ENCODE measurements at regions of chr4 and their contacts with region 1.

Region 1: DNA sequence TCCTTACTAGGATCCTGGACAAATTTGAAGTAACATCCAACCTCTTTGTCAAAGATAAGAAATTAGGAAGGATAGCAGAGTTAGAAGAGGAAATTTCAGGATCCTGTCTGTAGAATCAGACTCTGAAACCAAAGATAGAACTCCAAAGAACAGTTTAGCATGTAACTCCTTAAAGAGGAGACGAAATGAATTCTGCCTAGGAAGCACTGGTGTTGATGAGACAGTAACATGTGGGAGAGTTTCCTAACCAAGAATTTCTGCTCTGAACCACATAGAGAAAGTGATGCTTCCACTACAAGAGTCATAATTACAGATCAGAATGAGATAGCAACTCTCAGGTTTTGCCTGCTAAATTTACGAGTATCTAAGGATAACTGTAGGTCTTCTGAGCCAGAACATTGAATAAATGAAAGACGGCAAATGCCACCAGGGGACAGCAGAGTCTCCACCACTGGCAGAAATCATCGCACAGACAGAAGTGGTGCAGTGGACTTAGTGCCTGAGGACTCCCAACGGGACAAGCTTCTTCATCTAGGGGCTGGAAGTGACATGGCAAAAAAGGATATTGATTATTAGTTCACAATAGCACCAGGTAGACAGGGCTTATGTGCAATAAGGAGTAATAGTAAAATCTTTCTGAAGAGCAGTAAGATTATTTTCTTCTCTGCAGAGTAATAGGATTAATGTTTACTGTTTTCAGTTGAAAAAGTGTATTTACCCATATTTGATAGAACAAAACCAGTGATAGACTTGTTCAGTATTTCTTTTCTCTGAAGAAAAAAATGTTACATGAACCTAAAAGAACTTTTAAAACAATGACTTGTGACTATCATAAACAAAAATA is 6.7 kb upstream of the PPID start:
- DNase-seq: peak; percentile 70
- ATAC-seq: peak; percentile 91
- H3K4me3 Mint-ChIP-seq: no peak overlapping the region
- H3K27ac Mint-ChIP-seq: no peak overlapping the region
- H3K4me1 Mint-ChIP-seq: peaks cover 32% of the 10 kb centered on the region
- H3K27me3 Mint-ChIP-seq: peaks cover 32% of the 10 kb centered on the region
- CTCF ChIP-seq: peak; percentile 73

Region 2: DNA sequence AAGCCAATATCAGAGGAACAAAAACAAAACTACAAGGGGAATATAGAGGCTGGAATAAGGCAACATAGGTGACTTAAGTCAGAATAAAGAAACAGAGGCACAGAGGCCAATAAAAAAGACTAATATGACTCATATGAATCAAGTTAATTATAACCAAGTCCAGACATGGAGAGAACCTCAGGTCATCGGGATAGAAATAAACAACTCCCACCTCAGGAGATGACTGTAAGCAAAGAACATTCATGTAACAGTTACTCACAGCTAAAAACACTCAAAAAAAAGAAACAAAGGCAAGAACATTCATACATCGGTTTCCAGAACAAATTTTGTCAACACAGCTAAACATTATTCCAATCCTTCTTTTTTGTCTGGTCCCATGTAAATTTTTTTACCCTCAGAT is 268.6 kb before region 1 on chr4:
- CTCF ChIA-PET with region 1: no interaction called
- POLR2A ChIA-PET with region 1: no interaction called
- intact Hi-C with region 1: no loop called
- DNase-seq: no peak
- ATAC-seq: no peak
- H3K4me3 Mint-ChIP-seq: no peak overlapping the region
- H3K27ac Mint-ChIP-seq: no peak overlapping the region
- H3K4me1 Mint-ChIP-seq: no peaks in the 10 kb centered on the region
- H3K27me3 Mint-ChIP-seq: no peaks in the 10 kb centered on the region
- CTCF ChIP-seq: no peak

Region 3: GRCh38 chr4:158884280-158884679 is 154.3 kb after region 1 on chr4:
- CTCF ChIA-PET with region 1: no interaction called
- POLR2A ChIA-PET with region 1: no interaction called
- intact Hi-C with region 1: no loop called
- DNase-seq: no peak
- ATAC-seq: no peak
- H3K4me3 Mint-ChIP-seq: no peak overlapping the region
- H3K27ac Mint-ChIP-seq: no peak overlapping the region
- H3K4me1 Mint-ChIP-seq: no peaks in the 10 kb centered on the region
- H3K27me3 Mint-ChIP-seq: no peaks in the 10 kb centered on the region
- CTCF ChIP-seq: no peak

Region 4: GRCh38 chr4:159446266-159446976 is 716.5 kb after region 1 on chr4:
- CTCF ChIA-PET with region 1: no interaction called
- POLR2A ChIA-PET with region 1: no interaction called
- intact Hi-C with region 1: loop called (anchors 10 kb)
- DNase-seq: peak; percentile 31
- ATAC-seq: peak; percentile 94
- H3K4me3 Mint-ChIP-seq: no peak overlapping the region
- H3K27ac Mint-ChIP-seq: no peak overlapping the region
- H3K4me1 Mint-ChIP-seq: no peaks in the 10 kb centered on the region
- H3K27me3 Mint-ChIP-seq: peaks cover 11% of the 10 kb centered on the region
- CTCF ChIP-seq: peak; percentile 73

Region 5: GRCh38 chr4:160082432-160083207 is 1352.7 kb after region 1 on chr4:
- CTCF ChIA-PET with region 1: no interaction called
- POLR2A ChIA-PET with region 1: no interaction called
- intact Hi-C with region 1: no loop called
- DNase-seq: no peak
- ATAC-seq: no peak
- H3K4me3 Mint-ChIP-seq: no peak overlapping the region
- H3K27ac Mint-ChIP-seq: no peak overlapping the region
- H3K4me1 Mint-ChIP-seq: no peaks in the 10 kb centered on the region
- H3K27me3 Mint-ChIP-seq: no peaks in the 10 kb centered on the region
- CTCF ChIP-seq: no peak

Measured in activated CD8-positive, alpha-beta T cell treated with anti-CD3 and anti-CD28 coated beads for 36 hours (primary cell).